ENCODE measurements at regions of chr19 and their contacts with region 1.

Region 1: DNA sequence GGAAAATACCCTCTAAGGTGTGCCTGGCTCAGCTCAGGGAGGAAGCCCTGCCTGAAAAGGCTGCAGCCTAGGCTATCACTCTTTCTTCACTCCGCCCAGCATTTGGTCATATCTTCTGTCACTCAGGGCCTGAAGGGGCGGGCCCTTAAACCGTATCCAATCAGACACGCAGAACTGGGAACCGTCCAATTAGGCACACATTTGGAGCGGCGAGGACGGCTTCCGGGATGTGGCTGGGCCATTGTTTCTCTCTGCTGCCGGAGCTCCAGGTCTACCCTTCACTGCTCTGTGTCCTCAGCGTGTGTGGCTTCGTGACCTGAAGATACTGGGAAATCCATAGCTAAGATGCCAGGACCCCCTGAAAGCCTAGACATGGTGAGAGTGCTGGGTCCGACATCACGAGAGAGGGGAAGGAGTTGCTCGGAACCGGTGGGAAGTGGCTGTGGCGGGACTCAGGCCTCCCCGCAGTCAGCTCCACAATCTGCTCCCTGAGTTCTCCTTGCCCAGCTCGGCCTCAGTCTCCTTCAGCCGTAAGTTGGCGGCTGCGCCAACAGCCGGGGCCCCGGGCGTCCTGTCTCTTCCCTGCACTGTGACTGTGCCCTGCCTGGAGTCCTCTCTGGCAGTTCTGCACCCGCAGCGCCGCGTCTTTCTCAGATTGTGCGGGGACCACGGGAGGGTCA is at the start of gene ZNF493:
- DNase-seq: peak; percentile 95
- ATAC-seq: peak; percentile 100
- total RNA-seq, gene ZNF493: 11.9 TPM

Region 2: DNA sequence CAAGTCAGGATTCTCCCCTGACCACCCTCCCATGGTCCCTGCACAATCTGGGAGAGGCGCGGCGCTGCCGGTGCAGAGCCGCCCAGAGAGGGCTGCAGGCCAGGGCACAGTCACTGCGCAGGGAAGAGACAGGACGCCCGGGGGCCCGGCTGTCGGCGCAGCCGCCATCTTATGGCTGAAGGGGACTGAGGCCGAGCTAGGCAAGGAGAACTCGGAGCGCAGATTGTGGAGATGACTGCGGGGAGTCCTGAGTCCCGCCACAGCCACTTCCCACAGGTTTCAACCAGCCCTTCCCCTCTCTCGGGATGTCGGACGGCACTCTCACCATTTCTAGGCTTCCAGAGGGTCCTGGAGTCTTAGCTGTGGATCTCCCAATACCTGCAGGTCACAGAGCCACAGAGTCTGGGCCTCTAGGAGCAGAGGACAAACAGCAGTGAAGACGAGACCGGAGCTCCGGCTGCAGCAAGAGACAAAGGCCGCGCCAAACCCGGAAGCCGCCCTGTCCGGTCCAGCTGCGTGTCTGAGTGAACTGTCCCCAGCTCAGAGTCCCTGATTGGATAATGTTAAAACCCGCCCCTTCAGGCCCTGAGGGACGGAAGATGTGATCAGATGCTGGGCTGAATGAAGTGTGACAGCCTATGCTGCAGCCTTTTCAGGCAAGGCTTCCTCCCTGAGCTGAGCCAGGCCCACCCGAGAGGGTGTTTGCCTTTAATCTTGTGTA is 68.0 kb before region 1 on chr19 and contains the start of gene ZNF708:
- intact Hi-C with region 1: loop called (anchors 2 kb)
- DNase-seq: peak; percentile 93
- ATAC-seq: peak; percentile 100
- total RNA-seq, gene ZNF708: 3.5 TPM

Region 3: DNA sequence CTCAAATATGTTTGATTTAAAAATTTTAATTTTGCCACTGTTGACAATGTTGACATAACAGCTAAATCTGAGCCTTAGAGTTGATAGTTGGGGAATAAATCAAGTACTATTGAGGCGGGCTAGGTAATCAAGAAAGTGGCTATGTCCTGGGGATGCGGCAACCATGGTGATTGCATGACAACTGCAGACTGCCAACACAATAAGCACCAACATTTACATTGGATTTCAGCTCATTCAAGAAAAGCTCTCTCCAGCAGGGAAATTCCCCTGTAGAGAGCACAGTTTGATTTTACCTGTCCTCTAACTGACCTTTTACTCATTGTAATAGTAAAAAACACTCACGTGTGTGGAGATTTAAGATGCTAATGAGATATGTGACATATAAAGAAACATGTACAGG is 307.3 kb after region 1 on chr19:
- intact Hi-C with region 1: no loop called
- DNase-seq: no peak
- ATAC-seq: no peak